ENCODE measurements at regions of chr16 and their contacts with region 1.

Region 1: GRCh38 chr16:67514382-67514828 is 14.2 kb upstream of the RIPOR1 start:
- DNase-seq: peak; percentile 61
- H3K4me3 ChIP-seq: no peak overlapping the region; a peak in 1 of 4 replicates
- H3K27ac ChIP-seq: no peak overlapping the region
- H3K4me1 ChIP-seq: peaks cover 0 to 11% of the 10 kb centered on the region in 2 experiments; a peak in 1 of 4 replicates
- H3K27me3 ChIP-seq: no peaks in the 10 kb centered on the region
- CTCF ChIP-seq: peak; percentile 82
- EP300 ChIP-seq: no peak
- RAD21 ChIP-seq: peak; percentile 74

Region 2: GRCh38 chr16:67480833-67481560 is 33.4 kb before region 1 on chr16 and contains the start of gene ATP6V0D1:
- CTCF ChIA-PET with region 1: interaction called, 57 read pairs
- POLR2A ChIA-PET with region 1: interaction called, 4 read pairs
- DNase-seq: peak; percentile 98
- H3K4me3 ChIP-seq: peak within 1 kb of the TSS; percentile 80 to 100
- H3K27ac ChIP-seq: peak within 1 kb of the TSS; percentile 89 to 91
- H3K4me1 ChIP-seq: peaks cover 6 to 19% of the 10 kb centered on the region in 2 experiments; a peak in 1 of 4 replicates
- H3K27me3 ChIP-seq: no peaks in the 10 kb centered on the region
- CTCF ChIP-seq: peak; percentile 79
- EP300 ChIP-seq: no peak
- RAD21 ChIP-seq: peak; percentile 68
- polyA plus RNA-seq, gene ATP6V0D1: 111 and 135 TPM in 2 replicates

Region 3: GRCh38 chr16:67490335-67491096 is 23.9 kb before region 1 on chr16:
- CTCF ChIA-PET with region 1: interaction called, 104 read pairs
- POLR2A ChIA-PET with region 1: no interaction called
- DNase-seq: no peak
- H3K4me3 ChIP-seq: no peak overlapping the region
- H3K27ac ChIP-seq: no peak overlapping the region; a peak in 1 of 4 replicates
- H3K4me1 ChIP-seq: peaks cover 0 to 6% of the 10 kb centered on the region in 2 experiments; a peak in 1 of 4 replicates
- H3K27me3 ChIP-seq: no peaks in the 10 kb centered on the region
- CTCF ChIP-seq: no peak
- EP300 ChIP-seq: no peak
- RAD21 ChIP-seq: no peak

Region 4: DNA sequence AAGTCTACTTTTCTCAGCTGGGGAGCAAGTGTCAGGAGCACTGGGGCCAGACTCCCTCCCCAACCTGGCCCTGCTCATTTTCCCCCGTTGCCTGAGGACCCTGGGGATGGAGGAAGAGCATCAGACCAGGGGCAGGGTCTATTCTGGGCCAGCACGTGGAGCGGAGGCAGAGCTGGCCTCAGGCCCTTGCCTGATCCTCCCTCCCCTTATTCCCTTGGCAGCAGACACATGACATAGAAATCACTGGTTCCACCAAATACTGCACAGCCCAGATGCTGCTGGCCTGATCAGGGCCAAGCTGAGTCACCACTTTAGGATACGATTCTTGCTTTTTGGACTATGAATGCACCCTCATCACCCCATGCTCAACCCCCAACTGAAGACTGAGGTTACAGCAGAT is 15.3 kb before region 1 on chr16:
- CTCF ChIA-PET with region 1: interaction called, 104 read pairs
- POLR2A ChIA-PET with region 1: no interaction called
- DNase-seq: no peak
- H3K4me3 ChIP-seq: no peak overlapping the region
- H3K27ac ChIP-seq: no peak overlapping the region
- H3K4me1 ChIP-seq: no peaks in the 10 kb centered on the region
- H3K27me3 ChIP-seq: no peaks in the 10 kb centered on the region
- CTCF ChIP-seq: no peak
- EP300 ChIP-seq: no peak
- RAD21 ChIP-seq: no peak

Region 5: GRCh38 chr16:67530013-67530939 is 15.9 kb after region 1 on chr16:
- CTCF ChIA-PET with region 1: interaction called, 72 read pairs
- POLR2A ChIA-PET with region 1: no interaction called
- DNase-seq: peak; percentile 89
- H3K4me3 ChIP-seq: peak overlapping the region; percentile 77 to 99
- H3K27ac ChIP-seq: peak overlapping the region; percentile 83; a peak in 3 of 4 replicates
- H3K4me1 ChIP-seq: peaks cover 21% of the 10 kb centered on the region in 2 experiments; a peak in 3 of 4 replicates
- H3K27me3 ChIP-seq: no peaks in the 10 kb centered on the region
- CTCF ChIP-seq: no peak
- EP300 ChIP-seq: 0 out of 4 replicates have a peak, but pooled peaks of 1 of the 2 experiments have one; percentile 6
- RAD21 ChIP-seq: no peak

Region 6: GRCh38 chr16:67667817-67668494 is 153.6 kb after region 1 on chr16:
- CTCF ChIA-PET with region 1: interaction called, 246 read pairs
- POLR2A ChIA-PET with region 1: no interaction called
- DNase-seq: peak; percentile 95
- H3K4me3 ChIP-seq: peak overlapping the region; percentile 19 to 67; a peak in 2 of 4 replicates
- H3K27ac ChIP-seq: peak overlapping the region; percentile 56 to 86; a peak in 3 of 4 replicates
- H3K4me1 ChIP-seq: peaks cover 12 to 31% of the 10 kb centered on the region in 2 experiments; a peak in 2 of 4 replicates
- H3K27me3 ChIP-seq: no peaks in the 10 kb centered on the region
- CTCF ChIP-seq: peak; percentile 82
- EP300 ChIP-seq: no peak
- RAD21 ChIP-seq: peak; percentile 74

Region 7: DNA sequence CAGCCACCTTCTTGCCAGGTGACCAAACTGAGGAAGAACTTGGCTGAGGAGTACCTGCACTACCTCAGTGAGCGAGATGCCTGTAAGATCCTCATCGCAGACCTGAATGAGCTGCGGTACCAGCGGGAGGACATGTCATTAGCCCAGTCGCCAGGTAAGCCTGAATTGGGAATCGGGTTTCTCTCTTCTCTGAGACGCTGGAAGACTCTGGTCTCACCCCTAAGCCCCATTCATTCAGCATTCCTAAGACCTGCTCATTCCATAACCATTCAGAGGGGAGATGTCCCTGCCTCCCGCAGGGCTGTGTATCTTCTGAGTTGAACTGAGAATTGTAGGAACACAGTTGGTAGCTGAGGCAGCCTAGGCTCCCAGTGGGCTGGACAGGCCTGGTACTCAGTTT is 310.7 kb after region 1 on chr16:
- CTCF ChIA-PET with region 1: no interaction called
- POLR2A ChIA-PET with region 1: no interaction called
- DNase-seq: no peak
- H3K4me3 ChIP-seq: no peak overlapping the region
- H3K27ac ChIP-seq: no peak overlapping the region
- H3K4me1 ChIP-seq: no peaks in the 10 kb centered on the region
- H3K27me3 ChIP-seq: no peaks in the 10 kb centered on the region
- CTCF ChIP-seq: no peak
- EP300 ChIP-seq: no peak
- RAD21 ChIP-seq: no peak

Region 8: DNA sequence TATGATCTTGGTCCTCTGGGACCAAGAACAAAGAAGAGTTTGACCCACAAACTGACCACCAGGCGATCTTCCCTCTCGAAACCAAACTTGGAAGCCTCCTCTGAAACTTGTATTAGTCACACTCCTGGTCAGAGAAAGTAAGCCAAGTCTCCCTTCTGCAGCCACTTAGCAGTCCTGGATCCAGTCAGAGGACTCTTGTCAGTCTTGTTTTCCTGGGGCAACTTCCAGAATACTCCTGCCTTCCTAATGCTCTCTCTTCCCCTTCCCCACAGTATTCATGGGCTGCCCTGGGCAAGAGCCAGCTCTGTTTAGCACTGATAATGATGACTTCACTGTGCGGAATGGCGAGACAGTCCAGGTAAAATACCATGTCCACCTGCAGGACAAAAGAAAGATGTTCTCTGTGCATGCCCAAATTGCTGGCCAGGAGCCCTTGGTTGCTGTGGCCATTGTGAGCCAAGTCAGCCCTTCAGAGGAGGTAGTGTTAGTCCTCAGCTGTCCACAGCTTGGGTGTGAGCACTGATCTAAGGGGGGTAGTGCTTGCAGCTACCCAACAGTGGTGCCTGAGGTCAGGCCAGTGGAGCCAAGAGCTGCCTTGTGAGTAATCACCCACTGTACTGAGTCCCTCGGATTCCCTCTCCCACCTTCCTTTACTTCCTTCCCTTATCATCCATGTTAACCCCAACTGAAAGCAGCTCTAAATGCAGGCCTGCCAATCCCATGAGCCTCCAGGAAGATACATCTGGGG is 1161.9 kb after region 1 on chr16:
- CTCF ChIA-PET with region 1: no interaction called
- POLR2A ChIA-PET with region 1: no interaction called
- DNase-seq: no peak
- H3K4me3 ChIP-seq: no peak overlapping the region
- H3K27ac ChIP-seq: no peak overlapping the region
- H3K4me1 ChIP-seq: no peaks in the 10 kb centered on the region
- H3K27me3 ChIP-seq: no peaks in the 10 kb centered on the region; the same call in 1 of the 2 replicates
- CTCF ChIP-seq: no peak
- EP300 ChIP-seq: no peak
- RAD21 ChIP-seq: no peak